ENCODE measurements at regions of chr12 and their contacts with region 1.

Region 1: DNA sequence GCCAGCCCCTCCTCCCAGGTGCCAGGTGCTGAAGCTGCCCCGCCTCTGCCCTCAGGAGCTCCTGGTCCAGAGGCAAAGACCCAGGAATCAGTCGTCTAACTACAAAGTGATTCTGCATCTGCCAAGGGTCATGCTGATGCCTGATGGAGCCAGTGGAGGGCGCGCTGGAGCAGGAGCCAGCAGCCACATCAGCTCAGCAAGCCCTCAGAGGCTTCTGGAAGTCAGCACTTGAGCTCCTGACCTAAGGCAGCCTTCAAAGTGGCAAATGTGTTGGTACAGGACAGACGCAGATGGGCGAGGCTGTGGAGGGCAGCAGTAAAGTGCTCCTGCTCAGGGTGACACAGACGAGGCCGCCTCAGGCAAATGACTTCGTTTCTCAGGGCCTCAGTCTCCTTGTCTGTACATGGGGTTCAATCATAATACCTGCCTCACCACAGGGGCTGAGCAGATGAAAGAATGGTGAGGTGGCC is 10.9 kb downstream of the C12orf43 start:
- DNase-seq: peak; percentile 52 to 73 (median 60)
- ATAC-seq: peak; percentile 92
- H3K4me3 ChIP-seq: no peak overlapping the region
- H3K27ac ChIP-seq: no peak overlapping the region
- H3K4me1 ChIP-seq: no peaks in the 10 kb centered on the region; a peak in 1 of 5 replicates
- H3K27me3 ChIP-seq: no peaks in the 10 kb centered on the region
- CTCF ChIP-seq: peak; percentile 86 to 90 (median 89)
- EP300 ChIP-seq: no peak
- POLR2A ChIP-seq: no peak
- RAD21 ChIP-seq: peak; percentile 58 to 81

Region 2: GRCh38 chr12:120928864-120929652 is 76.3 kb before region 1 on chr12:
- CTCF ChIA-PET with region 1: no interaction called
- POLR2A ChIA-PET with region 1: no interaction called
- in situ Hi-C with region 1: no loop called
- intact Hi-C with region 1: no loop called
- DNase-seq: no peak
- ATAC-seq: peak; percentile 43; the same call in 1 of the 3 replicates
- H3K4me3 ChIP-seq: no peak overlapping the region
- H3K27ac ChIP-seq: no peak overlapping the region
- H3K4me1 ChIP-seq: no peaks in the 10 kb centered on the region; a peak in 2 of 5 replicates
- H3K27me3 ChIP-seq: no peaks in the 10 kb centered on the region
- CTCF ChIP-seq: no peak
- EP300 ChIP-seq: no peak
- POLR2A ChIP-seq: no peak
- RAD21 ChIP-seq: no peak

Region 3: GRCh38 chr12:121053706-121054105 is 48.3 kb after region 1 on chr12:
- CTCF ChIA-PET with region 1: no interaction called
- POLR2A ChIA-PET with region 1: no interaction called
- in situ Hi-C with region 1: no loop called
- intact Hi-C with region 1: loop called (anchors 2 kb)
- DNase-seq: no peak
- ATAC-seq: no peak
- H3K4me3 ChIP-seq: no peak overlapping the region
- H3K27ac ChIP-seq: no peak overlapping the region
- H3K4me1 ChIP-seq: no peaks in the 10 kb centered on the region; a peak in 1 of 5 replicates
- H3K27me3 ChIP-seq: peaks cover 26 to 41% of the 10 kb centered on the region in 2 experiments
- CTCF ChIP-seq: no peak
- EP300 ChIP-seq: no peak
- POLR2A ChIP-seq: no peak
- RAD21 ChIP-seq: no peak

Region 4: GRCh38 chr12:121110211-121110940 is 105.0 kb after region 1 on chr12:
- CTCF ChIA-PET with region 1: interaction called, 3 read pairs
- POLR2A ChIA-PET with region 1: no interaction called
- in situ Hi-C with region 1: no loop called
- intact Hi-C with region 1: loop called (anchors 5 kb)
- DNase-seq: peak; percentile 65 to 80 (median 75)
- ATAC-seq: peak; percentile 92
- H3K4me3 ChIP-seq: no peak overlapping the region
- H3K27ac ChIP-seq: no peak overlapping the region
- H3K4me1 ChIP-seq: no peaks in the 10 kb centered on the region
- H3K27me3 ChIP-seq: peaks cover 2 to 14% of the 10 kb centered on the region in 2 experiments; a peak in 2 of 5 replicates
- CTCF ChIP-seq: peak; percentile 86 to 93 (median 92)
- EP300 ChIP-seq: no peak
- POLR2A ChIP-seq: no peak
- RAD21 ChIP-seq: peak; percentile 90 to 94

Region 5: GRCh38 chr12:121209624-121210572 is 204.5 kb after region 1 on chr12 and contains the start of gene P2RX4:
- CTCF ChIA-PET with region 1: no interaction called
- POLR2A ChIA-PET with region 1: no interaction called
- in situ Hi-C with region 1: no loop called
- intact Hi-C with region 1: loop called (anchors 10 kb)
- DNase-seq: peak; percentile 92 to 97 (median 96)
- ATAC-seq: peak; percentile 99
- H3K4me3 ChIP-seq: peak within 1 kb of the TSS; percentile 91
- H3K27ac ChIP-seq: peak within 1 kb of the TSS; percentile 89
- H3K4me1 ChIP-seq: peaks cover 11 to 24% of the 10 kb centered on the region in 2 experiments; a peak in 4 of 5 replicates
- H3K27me3 ChIP-seq: no peaks in the 10 kb centered on the region
- CTCF ChIP-seq: peak; percentile 45 to 95 (median 78); a peak in 5 of 6 replicates
- EP300 ChIP-seq: no peak
- POLR2A ChIP-seq: peak; percentile 92
- RAD21 ChIP-seq: peak; percentile 75 to 77
- polyA plus RNA-seq, gene P2RX4: 6.6 to 10.0 TPM

Measured in K562 (cell line).